Motor neuron (in vitro differentiated cells): ENCODE measurements at regions of chr13 and their contacts with region 1.

Region 1: GRCh38 chr13:78121459-78122348 is 203.1 kb upstream of the EDNRB start:
- ATAC-seq: peak in 4 of 8 experiments; percentile 23 to 41 (median 28)
- H3K4me3 ChIP-seq: no peak overlapping the region
- H3K27ac ChIP-seq: no peak overlapping the region
- H3K4me1 ChIP-seq: peaks cover 0 to 2% of the 10 kb centered on the region in 2 donors

Region 2: DNA sequence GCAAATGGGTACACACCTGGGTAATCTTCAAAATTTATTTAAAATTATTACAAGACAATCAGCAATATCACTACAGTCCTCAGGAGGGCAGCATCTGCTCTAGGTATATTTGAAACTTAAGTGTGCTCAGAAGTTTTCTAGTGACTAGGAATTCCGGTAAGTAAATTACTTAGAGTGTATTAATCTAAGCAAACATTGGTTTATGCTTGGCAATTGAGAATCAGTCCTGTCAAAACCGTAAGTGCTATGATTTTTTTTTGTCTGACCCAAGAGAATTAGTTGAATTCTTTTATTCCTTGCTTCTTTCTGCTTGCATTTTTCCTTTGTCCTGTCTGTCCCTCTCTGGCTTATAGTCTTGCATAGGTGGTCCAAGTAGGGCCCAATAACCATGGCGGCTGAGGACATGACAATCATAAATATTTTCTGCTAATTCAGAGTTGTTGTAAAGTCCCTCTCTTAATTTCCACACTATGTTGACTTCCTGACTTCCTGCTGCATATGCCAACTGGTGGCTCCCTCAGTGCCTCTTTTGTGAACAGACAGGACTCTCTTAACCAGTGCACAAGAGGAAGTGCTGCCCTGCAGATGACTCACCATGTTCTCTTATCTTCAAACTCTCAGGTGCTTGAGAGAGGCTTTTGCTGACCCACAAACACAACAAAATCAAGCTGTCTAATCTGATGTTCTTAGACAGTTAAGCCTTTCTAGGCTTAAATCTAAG is 342.0 kb before region 1 on chr13:
- in situ Hi-C with region 1: loop called in 8 of 9 experiments (anchors 10 to 25 kb)
- ATAC-seq: peak in 6 of 8 experiments; percentile 24 to 71 (median 55)
- H3K4me3 ChIP-seq: no peak overlapping the region
- H3K27ac ChIP-seq: no peak overlapping the region
- H3K4me1 ChIP-seq: peaks cover 10 to 13% of the 10 kb centered on the region in 2 donors

Region 3: DNA sequence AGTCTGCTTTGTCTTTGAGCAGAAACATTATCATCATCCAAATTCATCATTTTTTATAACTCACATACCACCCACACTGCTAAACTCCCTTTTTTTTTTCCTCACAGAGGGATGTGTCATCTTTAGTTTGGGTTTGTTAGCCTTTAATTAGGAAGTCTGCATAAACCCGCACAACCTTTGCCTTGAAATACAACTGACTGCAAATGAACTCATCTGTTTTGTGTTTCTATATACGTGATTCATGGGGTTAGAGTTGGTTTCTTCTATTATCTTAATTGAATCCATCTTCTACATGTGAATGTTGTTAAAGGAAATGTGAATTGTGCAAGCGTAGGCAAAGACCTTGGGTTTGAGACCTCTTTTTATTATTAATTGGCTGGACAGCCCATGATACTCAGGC is 321.5 kb before region 1 on chr13:
- in situ Hi-C with region 1: loop called in 5 of 9 experiments (anchors 10 to 25 kb)
- ATAC-seq: peak in 5 of 8 experiments; percentile 9 to 60 (median 45)
- H3K4me3 ChIP-seq: no peak overlapping the region
- H3K27ac ChIP-seq: no peak overlapping the region
- H3K4me1 ChIP-seq: peaks cover 0 to 4% of the 10 kb centered on the region in 2 donors